Activated B cell treated with CpG ODN at 0.5 μM for 24 hours (primary cell): ENCODE measurements at regions of chr7 and their contacts with region 1.

Region 1: DNA sequence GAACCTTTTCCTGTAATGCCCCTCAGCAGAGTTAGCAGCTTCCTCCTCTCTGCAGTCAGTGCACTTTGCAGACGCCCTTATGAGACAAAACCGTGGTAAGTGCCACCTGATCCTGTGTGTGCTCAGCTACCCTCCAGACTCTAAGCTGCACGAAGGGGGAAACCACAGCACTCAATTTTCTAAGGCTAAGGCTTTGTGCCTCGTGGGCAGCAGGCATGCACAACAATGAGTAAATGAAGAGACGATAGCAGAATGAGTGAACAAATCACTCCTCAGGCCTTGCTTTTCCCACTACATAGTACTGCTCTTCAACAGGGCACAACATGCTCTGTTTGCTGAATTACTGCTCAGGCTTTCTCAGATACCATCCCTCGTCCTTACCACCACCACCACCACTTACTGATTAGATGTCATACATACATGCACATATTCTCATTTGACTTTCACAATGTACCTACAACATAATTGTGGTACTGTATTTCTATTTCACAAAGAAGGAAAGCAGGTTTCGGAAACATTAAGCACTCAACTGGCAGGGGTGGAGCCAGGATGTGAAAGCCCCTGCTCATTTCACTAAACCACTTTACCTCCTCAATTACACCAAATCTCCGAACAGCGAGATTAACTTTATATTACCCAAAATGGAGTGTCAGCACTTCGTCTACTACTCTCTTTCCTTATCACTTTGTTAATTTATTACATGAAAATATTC is 85.4 kb downstream of the ICA1 start:
- DNase-seq: peak; percentile 21
- ATAC-seq: peak; percentile 89
- H3K4me3 Mint-ChIP-seq: peak overlapping the region; percentile 61
- H3K27ac Mint-ChIP-seq: peak overlapping the region; percentile 91
- H3K4me1 Mint-ChIP-seq: peaks cover 61% of the 10 kb centered on the region
- H3K27me3 Mint-ChIP-seq: no peaks in the 10 kb centered on the region
- CTCF ChIP-seq: no peak

Region 2: GRCh38 chr7:8125680-8126444 is 50.7 kb before region 1 on chr7:
- CTCF ChIA-PET with region 1: no interaction called
- POLR2A ChIA-PET with region 1: interaction called, 4 read pairs
- intact Hi-C with region 1: loop called (anchors 2 kb)
- DNase-seq: peak; percentile 40
- ATAC-seq: peak; percentile 92
- H3K4me3 Mint-ChIP-seq: peak overlapping the region; percentile 71
- H3K27ac Mint-ChIP-seq: peak overlapping the region; percentile 93
- H3K4me1 Mint-ChIP-seq: peaks cover 65% of the 10 kb centered on the region
- H3K27me3 Mint-ChIP-seq: no peaks in the 10 kb centered on the region
- CTCF ChIP-seq: no peak

Region 3: DNA sequence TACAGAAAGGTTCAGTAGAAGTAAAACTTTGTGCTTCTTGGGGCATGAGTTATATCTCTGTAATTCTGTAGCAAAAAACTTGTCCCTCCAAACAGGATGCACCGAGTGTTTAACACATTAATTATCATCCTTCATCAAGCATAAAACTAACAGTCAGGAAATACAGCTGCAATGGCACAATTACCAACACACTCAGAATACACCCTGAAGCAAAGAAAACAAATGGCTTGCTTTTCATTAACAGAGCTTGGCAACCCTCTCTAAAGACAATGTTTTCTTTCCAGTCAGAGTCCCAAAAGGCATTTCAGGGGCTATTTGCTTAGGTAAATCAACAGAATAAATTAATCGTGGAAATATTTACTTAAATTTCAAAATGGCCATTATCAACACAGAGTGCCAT is 22.3 kb before region 1 on chr7:
- CTCF ChIA-PET with region 1: no interaction called
- POLR2A ChIA-PET with region 1: no interaction called
- intact Hi-C with region 1: loop called (anchors 2 kb)
- DNase-seq: no peak
- ATAC-seq: no peak
- H3K4me3 Mint-ChIP-seq: no peak overlapping the region
- H3K27ac Mint-ChIP-seq: no peak overlapping the region
- H3K4me1 Mint-ChIP-seq: peaks cover 19% of the 10 kb centered on the region
- H3K27me3 Mint-ChIP-seq: no peaks in the 10 kb centered on the region
- CTCF ChIP-seq: no peak

Region 4: DNA sequence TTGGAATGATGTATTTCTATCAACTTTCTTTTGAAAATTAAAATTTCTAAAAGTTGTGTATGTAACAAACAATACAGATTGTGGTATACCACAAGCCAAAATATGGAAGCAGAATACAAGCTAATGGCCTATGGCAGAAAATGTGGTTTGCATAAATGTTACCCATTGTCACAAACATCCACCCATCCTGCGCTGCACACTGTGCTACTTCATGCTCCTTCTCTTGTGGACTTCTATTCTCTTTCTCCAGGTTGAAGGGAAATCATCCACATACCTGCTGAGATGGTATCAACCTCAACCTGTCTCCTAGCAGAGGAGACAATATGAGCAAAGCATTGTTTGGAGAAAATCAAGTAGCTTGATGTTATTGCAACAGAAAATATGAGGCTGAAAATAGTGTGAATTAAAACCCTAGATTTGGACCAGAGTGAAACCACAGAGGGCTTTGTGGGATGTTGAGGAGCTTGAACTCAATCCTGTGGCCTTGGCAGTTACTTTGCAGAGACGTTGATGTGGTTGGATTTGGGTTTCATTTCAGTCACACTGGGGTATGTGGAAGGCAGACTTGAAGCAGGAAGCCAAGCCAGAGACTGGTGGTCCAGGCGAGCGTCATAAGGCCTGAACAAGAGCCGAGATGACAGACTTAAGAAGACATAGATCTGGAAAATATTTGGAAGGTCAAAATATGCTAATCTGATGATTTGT is 21.6 kb after region 1 on chr7:
- CTCF ChIA-PET with region 1: no interaction called
- POLR2A ChIA-PET with region 1: no interaction called
- intact Hi-C with region 1: no loop called
- DNase-seq: no peak
- ATAC-seq: no peak
- H3K4me3 Mint-ChIP-seq: no peak overlapping the region
- H3K27ac Mint-ChIP-seq: no peak overlapping the region
- H3K4me1 Mint-ChIP-seq: no peaks in the 10 kb centered on the region
- H3K27me3 Mint-ChIP-seq: no peaks in the 10 kb centered on the region
- CTCF ChIP-seq: no peak

Region 5: GRCh38 chr7:8295638-8296361 is 119.3 kb after region 1 on chr7:
- CTCF ChIA-PET with region 1: no interaction called
- POLR2A ChIA-PET with region 1: no interaction called
- intact Hi-C with region 1: no loop called
- DNase-seq: no peak
- ATAC-seq: peak; percentile 67
- H3K4me3 Mint-ChIP-seq: no peak overlapping the region
- H3K27ac Mint-ChIP-seq: no peak overlapping the region
- H3K4me1 Mint-ChIP-seq: no peaks in the 10 kb centered on the region
- H3K27me3 Mint-ChIP-seq: peaks cover 6% of the 10 kb centered on the region
- CTCF ChIP-seq: no peak